ENCODE measurements at regions of chr9 and their contacts with region 1.

Region 1: GRCh38 chr9:121750715-121751623 is 99.5 kb downstream of the DAB2IP start:
- DNase-seq: no peak
- H3K4me3 ChIP-seq: no peak overlapping the region
- H3K27ac ChIP-seq: peak overlapping the region; percentile 44 to 94 (median 86)
- H3K4me1 ChIP-seq: peaks cover 95 to 100% (median 100%) of the 10 kb centered on the region in 4 donors
- H3K27me3 ChIP-seq: no peaks in the 10 kb centered on the region
- CTCF ChIP-seq: no peak
- EP300 ChIP-seq: no peak
- POLR2A ChIP-seq: no peak

Region 2: DNA sequence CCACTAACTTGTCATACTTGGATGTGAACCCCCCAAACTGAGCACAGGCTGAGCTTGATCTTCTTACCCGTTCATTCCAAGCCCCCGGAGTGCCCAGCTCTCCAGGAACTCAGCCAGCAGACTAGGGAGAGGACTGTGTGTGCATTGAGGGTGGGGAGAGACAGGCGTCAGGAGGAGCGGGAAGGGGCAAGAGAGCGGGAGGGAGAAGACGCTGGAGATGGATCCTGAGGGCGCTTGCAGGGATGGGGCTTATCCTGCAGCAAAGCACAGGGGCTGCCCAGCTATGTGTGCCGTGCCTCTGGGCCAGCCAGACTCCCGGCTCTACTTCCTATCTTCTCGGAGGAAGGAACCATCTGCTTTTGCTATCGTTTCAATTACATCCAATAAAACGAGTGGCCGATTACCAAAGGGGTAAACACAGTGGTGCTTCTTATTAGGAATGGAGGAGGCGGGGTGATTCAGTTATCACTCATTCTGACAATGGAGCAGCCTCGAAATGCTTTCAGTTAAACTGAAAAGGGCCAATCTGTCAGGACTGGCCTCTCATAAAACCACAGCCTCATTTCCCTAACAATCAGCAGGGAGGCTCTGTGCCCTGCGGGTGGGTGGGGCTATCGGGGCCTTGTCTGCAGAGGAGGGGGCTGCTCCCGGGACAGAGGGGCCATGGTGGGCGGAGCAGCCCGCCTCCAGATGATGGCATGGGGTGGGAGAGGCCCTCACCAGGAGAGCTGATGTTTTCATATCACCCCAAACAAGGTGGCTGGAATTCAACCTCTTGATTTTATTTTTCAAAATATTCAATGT is 68.7 kb after region 1 on chr9:
- intact Hi-C with region 1: no loop called
- DNase-seq: no peak
- H3K4me3 ChIP-seq: peak overlapping the region in 2 of 4 donors; percentile 7 to 31
- H3K27ac ChIP-seq: no peak overlapping the region
- H3K4me1 ChIP-seq: peaks cover 0 to 8% (median 6%) of the 10 kb centered on the region in 4 donors
- H3K27me3 ChIP-seq: no peaks in the 10 kb centered on the region
- CTCF ChIP-seq: no peak
- EP300 ChIP-seq: no peak
- POLR2A ChIP-seq: no peak

Region 3: DNA sequence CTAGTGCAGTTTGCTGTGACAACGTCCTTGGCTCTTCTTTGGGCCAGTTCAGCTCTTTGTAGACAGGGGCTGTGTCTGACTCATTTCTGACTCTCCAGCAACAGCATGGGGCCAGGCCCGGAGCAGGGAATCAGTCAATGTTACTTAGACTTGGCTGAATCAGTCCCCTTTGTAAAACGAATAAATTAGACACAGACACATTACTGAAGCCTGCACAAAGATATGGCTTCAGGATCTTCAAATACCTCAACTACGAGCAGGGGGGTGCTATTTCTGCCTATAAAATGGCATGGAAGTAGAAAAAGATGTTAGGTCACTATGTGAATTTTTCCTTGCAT is 137.4 kb after region 1 on chr9:
- intact Hi-C with region 1: loop called (anchors 10 kb)
- DNase-seq: no peak
- H3K4me3 ChIP-seq: no peak overlapping the region
- H3K27ac ChIP-seq: no peak overlapping the region
- H3K4me1 ChIP-seq: peaks cover 0 to 5% (median 2%) of the 10 kb centered on the region in 4 donors
- H3K27me3 ChIP-seq: no peaks in the 10 kb centered on the region
- CTCF ChIP-seq: no peak
- EP300 ChIP-seq: no peak
- POLR2A ChIP-seq: no peak

Measured in esophagus muscularis mucosa (tissue), 4 donors.